ENCODE measurements at regions of chr11 and their contacts with region 1.

Region 1: DNA sequence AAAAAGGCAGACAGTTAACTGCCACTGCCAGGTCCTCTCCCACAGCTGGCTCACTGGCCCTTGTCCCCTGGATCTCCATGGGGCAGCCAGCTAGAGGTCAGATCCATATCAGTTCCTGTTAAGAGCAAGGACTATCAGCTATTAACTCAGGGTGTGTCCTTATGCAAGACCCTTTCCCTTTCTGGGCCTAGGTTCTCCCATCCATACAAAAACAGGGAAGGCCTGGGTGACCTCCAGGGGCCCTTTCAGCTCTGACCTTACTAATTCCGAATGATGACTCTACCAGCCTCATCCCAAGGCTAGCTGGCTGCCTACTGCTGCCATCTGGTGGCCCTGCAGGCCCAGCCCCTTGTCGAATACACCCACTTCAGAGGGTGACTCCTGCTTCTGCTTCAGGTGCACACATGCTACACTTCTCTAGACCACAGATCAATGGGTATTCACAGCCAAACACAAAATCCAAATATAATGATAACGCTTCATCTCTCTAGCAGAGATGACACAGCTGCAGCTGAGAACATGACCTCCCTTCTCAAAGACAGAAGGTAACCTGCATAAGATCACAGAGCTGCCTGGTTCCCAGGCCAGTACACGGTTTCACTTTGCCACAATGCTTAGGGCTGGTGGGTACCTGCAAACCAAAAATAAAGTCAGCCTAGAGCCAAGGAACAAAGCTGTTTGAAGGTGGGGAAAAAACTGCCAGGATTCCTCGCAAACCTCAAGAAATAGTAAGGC is 34.1 kb downstream of the SERGEF start:
- DNase-seq: peak; percentile 69 to 73
- H3K4me3 ChIP-seq: no peak overlapping the region
- H3K4me3 Mint-ChIP-seq: no peak overlapping the region
- H3K27ac Mint-ChIP-seq: no peak overlapping the region
- H3K4me1 ChIP-seq: no peaks in the 10 kb centered on the region
- H3K4me1 Mint-ChIP-seq: no peaks in the 10 kb centered on the region
- H3K27me3 ChIP-seq: no peaks in the 10 kb centered on the region
- H3K27me3 Mint-ChIP-seq: no peaks in the 10 kb centered on the region
- CTCF ChIP-seq: peak; percentile 79 to 96

Region 2: DNA sequence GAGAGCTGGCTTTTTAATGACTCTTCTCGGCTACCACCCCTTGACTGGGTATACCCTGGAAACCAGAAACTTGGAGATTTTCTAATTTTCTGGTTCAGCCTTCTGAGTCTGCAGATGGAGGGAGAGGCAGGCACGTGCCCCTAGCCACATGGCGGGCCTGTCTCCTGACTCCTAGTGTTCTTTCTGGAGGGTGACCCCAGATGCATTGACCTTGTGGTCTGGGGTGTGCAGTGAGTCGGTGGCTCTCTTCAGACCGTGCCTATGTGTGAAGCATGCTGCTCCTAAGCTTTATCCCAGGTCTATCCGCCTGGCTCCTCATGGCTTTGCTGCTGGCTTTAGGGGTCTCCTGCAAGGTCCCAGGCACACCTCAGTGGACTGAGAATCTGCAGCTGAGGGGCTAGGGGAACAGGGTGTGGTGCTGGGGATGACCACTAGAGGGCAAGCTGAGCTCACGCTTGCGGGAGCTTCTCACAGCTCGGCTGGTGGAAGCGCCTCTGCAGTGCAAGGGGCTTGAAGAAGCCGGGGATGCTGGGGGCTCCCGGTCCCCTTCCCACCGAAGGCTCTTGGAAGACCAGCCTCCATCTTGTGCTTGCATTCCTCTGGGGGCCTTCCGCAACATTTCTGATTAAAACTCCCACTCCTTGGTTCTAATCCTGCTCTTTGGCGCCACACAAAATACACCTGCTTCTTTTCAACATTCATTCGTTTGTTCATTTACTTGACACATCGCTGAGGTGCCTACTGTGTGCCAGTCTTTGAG is 379.8 kb before region 1 on chr11:
- CTCF ChIA-PET with region 1: interaction called, 4 read pairs
- POLR2A ChIA-PET with region 1: no interaction called
- intact Hi-C with region 1: loop called (anchors 1 kb)
- DNase-seq: peak; percentile 73 to 85
- H3K4me3 ChIP-seq: no peak overlapping the region
- H3K4me3 Mint-ChIP-seq: no peak overlapping the region
- H3K27ac Mint-ChIP-seq: no peak overlapping the region
- H3K4me1 ChIP-seq: no peaks in the 10 kb centered on the region
- H3K4me1 Mint-ChIP-seq: no peaks in the 10 kb centered on the region
- H3K27me3 ChIP-seq: no peaks in the 10 kb centered on the region
- H3K27me3 Mint-ChIP-seq: peaks cover 7% of the 10 kb centered on the region
- CTCF ChIP-seq: peak; percentile 97 to 98

Region 3: DNA sequence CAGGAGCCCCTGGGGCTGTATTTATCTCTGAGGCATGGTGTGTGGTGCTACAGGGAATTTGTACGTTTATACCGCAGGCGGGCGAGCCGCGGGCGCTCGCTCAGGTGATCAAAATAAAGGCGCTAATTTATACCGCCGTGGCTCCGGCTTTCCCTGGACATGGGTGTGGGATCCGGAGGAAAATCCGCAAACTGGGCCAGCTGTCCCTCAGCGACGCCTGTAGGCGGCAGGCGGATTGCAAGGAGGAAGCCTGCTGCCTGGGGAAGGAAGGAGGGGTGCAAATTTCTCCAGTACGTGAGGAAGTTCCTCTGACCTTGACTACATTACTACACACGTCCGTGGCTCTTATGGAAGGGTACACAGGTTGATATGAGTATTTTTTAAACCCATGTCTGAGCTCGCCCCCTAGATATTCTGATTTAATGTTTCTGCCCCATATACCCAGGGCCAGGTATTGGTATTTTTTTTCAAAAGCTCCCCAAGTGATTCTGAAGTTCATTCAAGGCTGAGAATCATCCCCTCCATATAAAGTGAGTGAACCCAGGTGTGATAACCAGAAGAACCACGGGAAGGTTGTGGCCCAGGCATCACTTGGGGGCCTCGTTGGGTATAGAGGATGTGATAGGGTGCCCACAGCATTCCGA is 256.6 kb before region 1 on chr11:
- CTCF ChIA-PET with region 1: no interaction called
- POLR2A ChIA-PET with region 1: no interaction called
- intact Hi-C with region 1: no loop called
- DNase-seq: no peak
- H3K4me3 ChIP-seq: no peak overlapping the region
- H3K4me3 Mint-ChIP-seq: no peak overlapping the region
- H3K27ac Mint-ChIP-seq: no peak overlapping the region
- H3K4me1 ChIP-seq: no peaks in the 10 kb centered on the region
- H3K4me1 Mint-ChIP-seq: no peaks in the 10 kb centered on the region
- H3K27me3 ChIP-seq: no peaks in the 10 kb centered on the region; the same call in none of the 2 replicates
- H3K27me3 Mint-ChIP-seq: peaks cover 11% of the 10 kb centered on the region
- CTCF ChIP-seq: peak in 1 of 2 experiments; percentile 14

Region 4: DNA sequence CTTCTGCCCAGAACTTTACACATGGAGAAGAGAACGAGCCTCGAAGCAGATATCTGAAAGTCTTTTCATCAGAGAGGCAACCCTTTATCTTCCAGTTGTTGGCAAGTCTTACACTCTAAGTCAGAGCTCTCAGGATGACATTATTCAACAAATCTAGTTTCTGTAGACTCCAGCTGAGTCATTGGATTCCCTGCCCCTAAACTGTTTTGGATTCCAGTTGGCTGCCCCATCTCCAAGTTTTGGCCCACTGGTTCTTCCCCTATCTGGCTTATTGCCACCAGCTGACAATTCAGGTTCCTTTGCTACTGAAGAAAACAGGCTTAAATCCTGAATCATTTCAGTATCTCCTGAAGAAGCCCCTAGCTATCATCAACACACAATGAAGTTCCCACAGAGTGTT is 113.0 kb after region 1 on chr11:
- CTCF ChIA-PET with region 1: no interaction called
- POLR2A ChIA-PET with region 1: no interaction called
- intact Hi-C with region 1: no loop called
- DNase-seq: no peak
- H3K4me3 ChIP-seq: no peak overlapping the region
- H3K4me3 Mint-ChIP-seq: no peak overlapping the region
- H3K27ac Mint-ChIP-seq: no peak overlapping the region
- H3K4me1 ChIP-seq: peaks cover 26% of the 10 kb centered on the region
- H3K4me1 Mint-ChIP-seq: peaks cover 20% of the 10 kb centered on the region
- H3K27me3 ChIP-seq: no peaks in the 10 kb centered on the region
- H3K27me3 Mint-ChIP-seq: no peaks in the 10 kb centered on the region
- CTCF ChIP-seq: no peak

Measured in Caco-2 (cell line).